HAP-1 (cell line): ENCODE measurements at regions of chr2 and their contacts with region 1.

Region 1: DNA sequence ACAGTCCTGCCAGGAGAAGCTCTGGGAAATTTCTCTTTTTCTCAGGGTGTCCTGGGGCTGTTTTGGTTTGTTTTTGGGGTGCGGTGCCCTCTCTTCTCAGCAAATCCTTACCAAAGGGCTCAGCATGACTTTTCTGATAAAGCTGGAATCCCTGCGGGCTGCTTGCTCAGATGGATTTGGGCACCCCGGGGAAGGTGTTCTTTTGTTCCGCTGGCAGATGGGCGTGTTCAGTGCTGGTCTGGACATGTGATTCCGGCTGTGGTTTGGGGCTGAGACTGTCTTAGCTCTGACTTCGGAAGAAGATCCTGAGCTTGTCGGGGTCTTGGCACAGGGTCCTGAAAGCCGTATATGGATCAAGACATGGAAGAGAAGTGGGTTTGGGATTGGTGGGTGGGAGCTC is 134.2 kb upstream of the SPRED2 start:
- DNase-seq: peak; percentile 29 to 72
- H3K4me3 ChIP-seq: no peak overlapping the region
- H3K4me1 ChIP-seq: peaks cover 9% of the 10 kb centered on the region
- H3K27me3 ChIP-seq: no peaks in the 10 kb centered on the region

Region 2: DNA sequence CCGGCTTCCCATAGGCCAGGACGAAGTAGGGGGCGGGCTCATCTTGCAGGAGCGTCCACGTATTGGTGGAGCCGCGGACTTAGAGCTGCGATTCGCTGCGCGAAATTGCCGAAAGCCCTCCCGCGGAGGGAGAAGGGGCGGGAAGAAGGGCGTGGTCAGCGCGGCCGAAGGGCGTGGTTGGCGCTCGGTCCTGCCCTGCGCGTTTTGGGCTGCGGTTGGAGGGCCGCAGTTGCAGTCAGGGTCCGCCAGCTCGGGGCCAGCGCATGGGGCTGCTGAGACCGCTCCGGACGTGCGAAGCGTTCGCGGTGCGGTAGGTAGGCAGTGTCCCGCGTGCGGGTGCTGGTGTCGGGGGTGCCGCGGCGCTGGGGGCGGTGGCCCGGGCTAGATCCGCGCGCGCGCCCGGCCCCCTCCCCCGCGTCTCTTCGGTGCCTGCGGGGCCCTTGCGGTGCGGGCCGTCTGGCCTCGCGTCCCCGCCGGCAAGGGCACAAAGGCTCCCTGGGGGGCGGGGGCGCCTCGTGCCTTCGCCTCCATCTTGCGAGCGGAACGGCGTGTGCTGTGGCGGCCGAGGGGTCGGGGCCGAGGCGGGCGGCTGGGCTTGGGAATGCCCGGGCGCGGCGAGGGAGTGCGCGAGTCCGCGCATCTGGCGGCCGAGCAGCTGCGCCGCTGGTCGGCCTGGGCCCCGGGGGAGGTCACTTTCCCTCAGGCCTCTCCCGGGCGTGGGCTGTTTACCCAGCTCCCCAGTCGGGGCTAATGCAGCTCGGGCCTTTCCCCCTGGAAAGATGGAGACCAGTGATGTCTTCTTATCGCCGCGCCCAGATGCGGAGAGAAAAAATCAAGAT is 510.2 kb before region 1 on chr2 and contains the start of gene CEP68:
- in situ Hi-C with region 1: loop called (anchors 10 kb)
- DNase-seq: peak; percentile 97 to 98
- H3K4me3 ChIP-seq: peak within 1 kb of the TSS; percentile 72
- H3K4me1 ChIP-seq: peaks cover 8% of the 10 kb centered on the region
- H3K27me3 ChIP-seq: no peaks in the 10 kb centered on the region

Region 3: GRCh38 chr2:65264821-65265670 is 301.6 kb before region 1 on chr2:
- in situ Hi-C with region 1: no loop called
- DNase-seq: peak; percentile 55 to 60
- H3K4me3 ChIP-seq: no peak overlapping the region
- H3K4me1 ChIP-seq: no peaks in the 10 kb centered on the region
- H3K27me3 ChIP-seq: no peaks in the 10 kb centered on the region

Region 4: GRCh38 chr2:65329525-65329924 is 237.1 kb before region 1 on chr2:
- in situ Hi-C with region 1: no loop called
- DNase-seq: no peak
- H3K4me3 ChIP-seq: no peak overlapping the region
- H3K4me1 ChIP-seq: peaks cover 3% of the 10 kb centered on the region; the same call in 1 of the 2 replicates
- H3K27me3 ChIP-seq: no peaks in the 10 kb centered on the region

Region 5: DNA sequence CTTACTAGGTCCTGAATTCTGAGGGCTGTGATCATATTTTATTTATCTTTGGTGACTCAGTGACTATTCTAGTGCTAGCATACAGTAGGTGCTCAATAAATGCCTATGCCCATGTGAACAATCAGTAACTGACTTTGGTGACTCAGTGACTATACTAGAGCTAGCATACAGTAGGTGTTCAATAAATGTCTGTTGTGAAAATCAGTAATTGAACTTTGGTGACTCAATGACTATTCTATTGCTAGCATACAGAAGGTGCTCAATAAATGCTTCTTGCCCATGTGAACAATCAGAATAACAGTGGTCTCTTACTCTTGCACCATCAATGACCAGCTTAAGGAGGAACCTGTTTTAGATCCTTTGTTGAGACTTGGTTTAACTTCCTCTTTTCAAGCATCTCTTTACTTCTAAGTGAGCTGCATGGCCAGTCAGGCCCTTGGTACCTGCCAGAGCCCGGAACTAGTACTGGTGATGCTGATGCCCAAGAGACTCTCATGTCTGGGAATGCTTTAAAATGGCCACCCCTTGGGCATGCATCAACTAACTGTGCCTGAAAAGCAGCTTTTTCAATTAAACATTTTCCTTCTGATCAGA is 80.7 kb after region 1 on chr2:
- in situ Hi-C with region 1: no loop called
- DNase-seq: no peak
- H3K4me3 ChIP-seq: no peak overlapping the region
- H3K4me1 ChIP-seq: no peaks in the 10 kb centered on the region
- H3K27me3 ChIP-seq: no peaks in the 10 kb centered on the region

Region 6: DNA sequence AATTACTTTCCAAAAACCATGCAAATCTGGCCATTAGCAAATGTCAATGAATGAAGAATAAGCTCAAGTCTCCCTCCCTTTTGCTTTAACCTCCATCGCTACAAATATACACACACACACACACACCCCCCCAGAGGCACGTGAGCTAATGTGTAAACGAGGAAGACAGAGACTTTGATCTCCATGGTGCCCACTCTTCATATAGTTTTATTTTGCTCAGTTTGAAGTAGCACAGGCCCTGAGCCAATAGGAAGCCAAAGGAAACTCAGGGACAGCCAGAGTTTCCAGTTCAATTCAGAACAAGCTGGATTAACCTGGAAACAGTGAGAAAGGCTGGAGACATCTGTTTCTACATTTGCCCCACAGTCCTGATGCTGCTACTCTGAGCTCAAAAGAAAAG is 619.9 kb after region 1 on chr2:
- in situ Hi-C with region 1: no loop called
- DNase-seq: no peak
- H3K4me3 ChIP-seq: no peak overlapping the region
- H3K4me1 ChIP-seq: no peaks in the 10 kb centered on the region
- H3K27me3 ChIP-seq: 0 out of 2 replicates have a peak, but pooled peaks cover 2% of the 10 kb centered on the region